HEK293T (cell line): ENCODE measurements at regions of chr1 and their contacts with region 1.

Region 1: DNA sequence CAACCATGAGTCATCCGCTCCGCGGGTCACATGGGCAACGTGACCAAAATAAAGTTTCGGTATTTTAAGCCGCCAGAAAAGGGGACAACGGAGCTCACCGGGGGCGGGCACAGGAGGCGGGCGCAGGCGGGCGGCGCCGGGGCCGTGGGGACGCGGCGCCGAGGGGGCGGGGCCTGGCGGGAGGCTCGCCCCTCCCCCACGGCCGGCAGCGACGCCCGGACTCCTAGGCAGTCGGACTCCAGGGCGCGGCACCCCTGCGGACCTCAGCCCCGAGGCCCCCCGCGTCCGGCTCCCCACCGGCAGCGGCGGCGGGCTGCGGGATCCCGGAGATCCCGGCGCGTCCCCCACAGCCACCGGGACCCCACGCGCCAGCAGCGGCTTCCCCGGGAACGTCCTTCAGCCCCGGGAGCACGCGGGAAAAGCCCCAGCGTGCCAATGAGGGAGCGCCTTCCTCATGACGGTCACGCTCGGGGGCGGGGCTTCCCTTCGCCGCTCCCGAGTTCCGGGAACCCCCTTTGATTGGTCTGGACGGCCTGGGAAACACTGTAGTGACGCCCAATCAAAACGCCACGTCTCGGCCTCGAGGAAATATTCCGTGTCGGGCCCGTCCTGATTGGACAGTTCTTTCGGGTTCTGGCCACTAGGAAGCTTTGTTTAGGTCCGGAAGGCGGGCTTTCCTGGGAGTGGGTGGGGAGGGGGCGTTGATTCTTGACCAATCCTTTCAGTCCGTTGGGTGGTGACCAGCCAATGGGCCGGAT is 515 bp upstream of the CAMTA1 start:
- DNase-seq: peak; percentile 98

Region 2: GRCh38 chr1:6770751-6771440 is 13.8 kb before region 1 on chr1:
- CTCF ChIA-PET with region 1: interaction called, 3 read pairs
- POLR2A ChIA-PET with region 1: interaction called, 18 read pairs
- DNase-seq: peak; percentile 14

Region 3: DNA sequence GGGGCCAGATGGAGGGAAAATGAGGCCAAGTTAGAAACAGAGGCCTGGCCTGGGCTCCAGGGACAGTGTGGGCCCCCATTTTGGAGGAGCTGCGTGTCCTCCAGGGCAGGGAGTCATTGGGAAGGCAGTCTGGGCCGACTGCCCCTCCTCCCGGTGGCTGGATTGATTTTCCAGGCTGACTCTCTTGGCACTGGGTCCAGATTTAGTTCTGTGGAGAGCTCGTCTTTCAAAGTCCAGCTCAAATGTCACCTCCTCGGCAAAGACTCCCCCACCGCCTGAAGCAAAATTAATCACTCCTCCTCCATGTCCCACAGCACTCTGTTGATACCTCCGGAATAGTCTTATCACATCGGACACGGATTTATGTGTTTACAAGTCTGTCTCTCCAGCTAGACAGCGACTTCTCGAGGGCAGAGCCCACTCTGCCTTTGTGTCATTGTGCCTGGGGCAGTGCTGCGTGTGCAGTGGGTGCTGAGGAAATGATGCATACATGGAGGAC is 175.6 kb after region 1 on chr1:
- CTCF ChIA-PET with region 1: no interaction called
- POLR2A ChIA-PET with region 1: interaction called, 11 read pairs
- DNase-seq: peak; percentile 26